ENCODE measurements at regions of chr4 and their contacts with region 1.

Region 1: GRCh38 chr4:53908661-53909078 is 155.7 kb downstream of the CHIC2 start:
- DNase-seq: peak; percentile 78
- H3K4me3 Mint-ChIP-seq: no peak overlapping the region
- H3K27ac Mint-ChIP-seq: no peak overlapping the region
- H3K4me1 Mint-ChIP-seq: peaks cover 27% of the 10 kb centered on the region
- H3K27me3 Mint-ChIP-seq: no peaks in the 10 kb centered on the region
- CTCF ChIP-seq: peak; percentile 66

Region 2: GRCh38 chr4:53015681-53016080 is 893.0 kb before region 1 on chr4:
- CTCF ChIA-PET with region 1: no interaction called
- POLR2A ChIA-PET with region 1: no interaction called
- intact Hi-C with region 1: loop called (anchors 10 kb)
- DNase-seq: peak; percentile 34
- H3K4me3 Mint-ChIP-seq: no peak overlapping the region
- H3K27ac Mint-ChIP-seq: no peak overlapping the region
- H3K4me1 Mint-ChIP-seq: peaks cover 36% of the 10 kb centered on the region
- H3K27me3 Mint-ChIP-seq: no peaks in the 10 kb centered on the region
- CTCF ChIP-seq: peak; percentile 44

Region 3: DNA sequence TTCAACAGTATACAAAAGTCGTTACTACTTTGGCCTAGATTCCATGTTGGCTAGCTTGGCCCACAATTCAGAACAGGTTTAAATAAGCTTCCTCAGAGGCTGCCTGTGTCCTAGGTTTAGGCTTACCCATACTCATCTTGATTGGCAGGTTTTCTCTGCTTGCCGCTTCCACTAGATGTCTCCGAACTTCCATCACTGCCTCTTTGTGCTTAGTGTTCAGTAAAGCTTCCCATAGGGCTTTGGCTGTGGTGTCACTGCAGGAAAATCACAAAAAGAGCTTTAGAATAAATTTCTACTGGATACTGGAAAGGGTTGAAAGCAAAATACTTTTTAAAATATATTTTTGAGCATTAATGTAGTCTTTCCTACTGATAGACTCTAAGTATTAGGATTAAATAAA is 595.2 kb before region 1 on chr4:
- CTCF ChIA-PET with region 1: no interaction called
- POLR2A ChIA-PET with region 1: no interaction called
- intact Hi-C with region 1: loop called (anchors 5 kb)
- DNase-seq: peak; percentile 43
- H3K4me3 Mint-ChIP-seq: no peak overlapping the region
- H3K27ac Mint-ChIP-seq: no peak overlapping the region
- H3K4me1 Mint-ChIP-seq: peaks cover under 1% of the 10 kb centered on the region
- H3K27me3 Mint-ChIP-seq: no peaks in the 10 kb centered on the region
- CTCF ChIP-seq: no peak

Region 4: GRCh38 chr4:53702334-53703266 is 206.1 kb before region 1 on chr4:
- CTCF ChIA-PET with region 1: interaction called, 7 read pairs
- POLR2A ChIA-PET with region 1: no interaction called
- intact Hi-C with region 1: loop called (anchors 2 kb)
- DNase-seq: peak; percentile 92
- H3K4me3 Mint-ChIP-seq: peak overlapping the region; percentile 56
- H3K27ac Mint-ChIP-seq: peak overlapping the region; percentile 80
- H3K4me1 Mint-ChIP-seq: peaks cover 18% of the 10 kb centered on the region
- H3K27me3 Mint-ChIP-seq: no peaks in the 10 kb centered on the region
- CTCF ChIP-seq: no peak

Region 5: DNA sequence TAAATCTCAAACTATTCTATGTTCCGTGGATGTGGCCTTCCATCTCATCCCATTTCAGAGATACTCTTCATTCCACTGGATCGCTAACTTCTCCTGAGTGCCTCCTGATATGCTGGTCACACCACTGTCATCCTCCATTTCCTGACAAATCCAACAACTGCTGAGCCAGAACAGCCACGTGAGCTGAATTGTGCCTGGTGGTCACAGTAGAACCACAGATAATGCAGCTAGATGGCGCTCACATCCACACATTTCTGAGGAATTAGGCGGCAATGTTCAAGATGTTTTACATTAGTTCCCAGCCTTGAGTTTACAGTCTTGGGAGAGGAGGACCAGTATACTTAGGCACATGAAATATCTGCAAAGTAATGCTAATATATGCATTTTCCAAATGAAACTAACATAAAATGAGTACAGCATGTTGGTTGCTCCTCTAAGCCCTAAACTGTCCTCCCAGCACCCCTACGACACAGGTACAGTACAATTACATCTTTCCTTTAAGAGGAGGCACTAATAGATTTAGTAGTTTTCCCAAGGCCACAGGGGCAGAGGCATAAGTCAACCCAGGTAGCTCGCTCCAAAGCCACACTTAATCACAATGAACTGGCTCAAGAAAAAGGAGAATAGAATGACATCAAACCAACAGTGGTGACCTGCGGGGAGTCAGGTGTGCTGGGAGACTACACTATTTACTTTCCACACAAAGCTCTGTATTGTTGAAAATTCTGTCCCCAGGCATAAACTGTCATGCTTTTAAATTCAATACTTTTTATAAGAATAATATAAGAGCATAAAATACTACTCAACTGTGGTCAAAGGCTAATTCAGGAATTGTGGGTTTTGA is 21.5 kb after region 1 on chr4:
- CTCF ChIA-PET with region 1: interaction called, 84 read pairs
- POLR2A ChIA-PET with region 1: interaction called, 3 read pairs
- intact Hi-C with region 1: loop called (anchors 1 kb)
- DNase-seq: peak; percentile 83
- H3K4me3 Mint-ChIP-seq: no peak overlapping the region
- H3K27ac Mint-ChIP-seq: no peak overlapping the region
- H3K4me1 Mint-ChIP-seq: peaks cover 14% of the 10 kb centered on the region
- H3K27me3 Mint-ChIP-seq: no peaks in the 10 kb centered on the region
- CTCF ChIP-seq: peak; percentile 71

Region 6: GRCh38 chr4:54064295-54065111 is 155.8 kb after region 1 on chr4 and contains the start of gene CHIC2:
- CTCF ChIA-PET with region 1: interaction called, 12 read pairs
- POLR2A ChIA-PET with region 1: interaction called, 4 read pairs
- intact Hi-C with region 1: no loop called
- DNase-seq: peak; percentile 88
- H3K4me3 Mint-ChIP-seq: peak within 1 kb of the TSS; percentile 89
- H3K27ac Mint-ChIP-seq: peak within 1 kb of the TSS; percentile 97
- H3K4me1 Mint-ChIP-seq: peaks cover 44% of the 10 kb centered on the region
- H3K27me3 Mint-ChIP-seq: no peaks in the 10 kb centered on the region
- CTCF ChIP-seq: no peak
- total RNA-seq, gene CHIC2: 59.4 and 59.6 TPM in 2 replicates

Region 7: DNA sequence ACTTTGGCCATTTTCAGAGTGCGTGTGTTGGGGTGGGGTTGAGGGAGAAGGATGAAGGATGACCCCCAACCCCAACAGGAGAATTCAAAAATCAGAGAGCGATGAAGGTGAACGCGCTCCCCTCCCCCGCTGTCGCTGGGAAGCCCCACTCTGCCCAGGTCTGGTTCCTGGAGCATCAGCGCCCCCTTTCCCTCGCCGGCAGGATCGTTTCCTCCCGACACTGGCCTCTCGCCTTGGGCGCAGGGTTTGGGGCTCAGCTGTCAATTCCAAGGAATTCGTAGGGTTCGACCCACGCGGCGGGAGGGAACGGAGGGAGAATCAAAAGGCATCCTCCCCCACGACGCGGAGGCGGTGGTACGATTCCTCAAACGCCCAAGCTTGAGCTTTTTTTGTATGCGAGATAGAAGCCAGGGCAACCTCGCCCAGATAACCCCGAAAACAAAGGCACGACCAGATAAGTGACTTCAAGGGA is 319.4 kb after region 1 on chr4:
- CTCF ChIA-PET with region 1: interaction called, 154 read pairs
- POLR2A ChIA-PET with region 1: no interaction called
- intact Hi-C with region 1: loop called (anchors 1 kb)
- DNase-seq: peak; percentile 71
- H3K4me3 Mint-ChIP-seq: peak overlapping the region; percentile 78
- H3K27ac Mint-ChIP-seq: no peak overlapping the region
- H3K4me1 Mint-ChIP-seq: peaks cover 6% of the 10 kb centered on the region
- H3K27me3 Mint-ChIP-seq: peaks cover 26% of the 10 kb centered on the region
- CTCF ChIP-seq: peak; percentile 85